Common myeloid progenitor, CD34-positive (primary cell): ENCODE measurements at regions of chr2 and their contacts with region 1.

Region 1: GRCh38 chr2:113203901-113204519 is 30.2 kb downstream of the PSD4 start:
- DNase-seq: peak; percentile 72 to 83 (median 78)
- H3K4me3 ChIP-seq: no peak overlapping the region
- H3K27ac ChIP-seq: no peak overlapping the region
- H3K4me1 ChIP-seq: peaks cover 0 to 9% (median 7%) of the 10 kb centered on the region in 4 experiments
- H3K27me3 ChIP-seq: no peaks in the 10 kb centered on the region

Region 2: DNA sequence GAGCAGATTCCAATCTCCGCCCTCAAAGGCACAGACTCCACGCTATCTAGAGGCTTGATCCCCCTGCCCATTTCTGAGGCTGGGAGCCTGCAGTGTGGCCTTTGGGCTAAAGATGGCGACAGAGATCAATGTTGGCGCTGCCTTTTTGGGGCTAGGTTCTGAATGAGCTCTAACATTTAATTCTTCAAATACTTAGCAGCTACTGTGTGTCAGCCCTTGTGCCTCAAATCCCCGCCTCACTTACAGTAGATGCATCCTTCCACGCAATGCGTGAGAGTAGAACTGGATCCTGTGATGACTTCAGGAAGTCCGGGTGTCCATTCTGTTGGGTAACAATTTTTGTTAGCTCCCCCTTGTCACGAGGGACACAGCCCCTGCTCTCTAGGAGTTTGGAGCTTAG is 123.9 kb before region 1 on chr2:
- CTCF ChIA-PET with region 1: interaction called, 57 read pairs
- POLR2A ChIA-PET with region 1: interaction called, 3 read pairs
- DNase-seq: peak; percentile 21 to 55 (median 48)
- H3K4me3 ChIP-seq: no peak overlapping the region
- H3K27ac ChIP-seq: no peak overlapping the region
- H3K4me1 ChIP-seq: peaks cover 0 to 2% (median 0%) of the 10 kb centered on the region in 4 experiments
- H3K27me3 ChIP-seq: no peaks in the 10 kb centered on the region

Region 3: DNA sequence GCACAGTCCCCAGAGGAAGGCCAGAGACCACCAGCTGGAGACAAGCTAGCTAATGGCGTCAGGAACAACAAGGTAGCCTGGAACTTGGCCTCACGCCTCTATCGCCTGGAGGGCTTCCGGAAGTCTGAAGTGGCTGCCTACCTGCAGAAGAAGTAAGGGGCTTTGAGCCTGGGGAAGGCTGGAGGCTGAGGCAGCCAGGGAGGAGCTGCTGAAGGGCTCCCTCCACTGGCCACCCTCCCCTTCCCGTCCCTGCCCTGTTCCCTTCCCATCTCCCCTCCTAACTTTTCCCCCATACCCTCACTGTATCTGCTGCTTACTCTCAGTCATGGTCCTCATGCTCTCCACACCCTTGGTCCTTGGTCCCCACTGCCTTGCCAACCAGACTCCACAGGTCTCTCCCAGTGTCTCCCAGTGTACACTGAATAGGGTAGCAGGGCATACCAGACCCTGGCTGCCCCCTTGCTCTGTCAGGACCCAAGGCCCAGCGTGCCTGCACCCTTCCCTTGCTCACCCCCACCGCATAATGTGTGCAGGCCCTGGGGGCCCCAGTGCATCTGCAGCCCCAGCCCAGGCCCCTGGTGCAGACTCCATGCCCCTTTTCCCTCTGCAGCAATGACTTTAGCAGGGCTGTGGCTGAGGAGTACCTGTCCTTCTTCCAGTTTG is 11.4 kb before region 1 on chr2:
- CTCF ChIA-PET with region 1: interaction called, 19 read pairs
- POLR2A ChIA-PET with region 1: no interaction called
- DNase-seq: no peak
- H3K4me3 ChIP-seq: no peak overlapping the region
- H3K27ac ChIP-seq: no peak overlapping the region
- H3K4me1 ChIP-seq: no peaks in the 10 kb centered on the region
- H3K27me3 ChIP-seq: no peaks in the 10 kb centered on the region

Region 4: DNA sequence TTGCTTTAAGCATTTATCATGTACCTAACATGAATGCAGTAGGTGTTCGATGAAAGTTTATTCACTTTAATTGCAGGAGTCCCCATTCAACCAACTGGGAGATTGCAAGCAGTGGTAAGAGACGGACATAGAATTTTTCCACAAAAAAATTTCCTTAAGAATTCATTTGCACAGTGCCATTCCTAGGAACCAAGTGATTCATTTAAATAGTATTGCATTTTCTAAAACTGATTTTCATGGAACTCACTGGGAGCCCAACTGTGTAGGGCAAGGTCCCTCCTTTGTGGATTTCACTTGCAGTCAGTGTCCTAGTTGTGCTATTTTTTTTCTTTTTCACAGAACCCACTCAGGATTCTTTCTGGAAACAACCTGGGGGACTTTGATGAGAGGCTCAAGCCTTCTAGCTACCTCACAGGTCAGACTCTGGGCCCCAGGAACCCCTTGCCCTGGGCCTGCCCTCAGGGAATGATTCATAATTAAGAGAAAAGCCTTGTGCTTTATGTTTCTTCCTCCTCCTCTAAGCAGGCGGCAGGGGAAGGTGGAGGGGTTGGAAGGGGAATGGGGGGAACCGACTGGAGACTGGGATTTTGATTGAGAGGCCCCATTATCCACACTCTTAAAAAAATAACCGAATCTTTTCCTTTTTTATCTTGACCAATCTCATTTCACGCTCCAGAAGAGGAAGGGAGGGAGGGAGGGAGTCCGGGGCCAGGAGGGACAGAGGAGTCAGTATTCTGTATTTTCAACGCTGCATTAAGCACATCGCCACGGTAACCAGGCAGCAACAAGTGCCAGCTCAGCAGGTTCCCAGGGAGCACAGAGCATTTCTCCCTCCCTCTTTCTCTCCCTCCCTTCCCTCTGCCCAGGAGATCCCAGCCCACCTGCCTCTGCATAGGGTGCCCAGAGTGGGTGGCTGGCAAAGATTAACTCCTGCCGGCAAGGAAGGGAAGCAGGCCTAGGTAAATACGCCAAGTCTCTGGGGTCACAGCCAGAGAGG is 21.6 kb after region 1 on chr2:
- CTCF ChIA-PET with region 1: interaction called, 42 read pairs
- POLR2A ChIA-PET with region 1: interaction called, 3 read pairs
- DNase-seq: peak in 2 of 3 donors; percentile 57 to 63
- H3K4me3 ChIP-seq: no peak overlapping the region
- H3K27ac ChIP-seq: no peak overlapping the region
- H3K4me1 ChIP-seq: peaks cover 23 to 61% (median 50%) of the 10 kb centered on the region in 4 experiments
- H3K27me3 ChIP-seq: no peaks in the 10 kb centered on the region

Region 5: GRCh38 chr2:113248997-113249770 is 45.2 kb after region 1 on chr2:
- CTCF ChIA-PET with region 1: interaction called, 146 read pairs
- POLR2A ChIA-PET with region 1: no interaction called
- DNase-seq: peak; percentile 69 to 79 (median 75)
- H3K4me3 ChIP-seq: no peak overlapping the region
- H3K27ac ChIP-seq: no peak overlapping the region
- H3K4me1 ChIP-seq: peaks cover 3 to 53% (median 18%) of the 10 kb centered on the region in 4 experiments
- H3K27me3 ChIP-seq: no peaks in the 10 kb centered on the region

Region 6: GRCh38 chr2:113390124-113390849 is 186.3 kb after region 1 on chr2:
- CTCF ChIA-PET with region 1: interaction called, 36 read pairs
- POLR2A ChIA-PET with region 1: no interaction called
- DNase-seq: peak; percentile 91 to 98 (median 95)
- H3K4me3 ChIP-seq: peak overlapping the region in 6 of 7 experiments; percentile 47 to 76 (median 64)
- H3K27ac ChIP-seq: peak overlapping the region; percentile 74 to 87
- H3K4me1 ChIP-seq: peaks cover 0 to 11% (median 8%) of the 10 kb centered on the region in 4 experiments
- H3K27me3 ChIP-seq: no peaks in the 10 kb centered on the region